ENCODE measurements at regions of chr1 and their contacts with region 1.

Region 1: DNA sequence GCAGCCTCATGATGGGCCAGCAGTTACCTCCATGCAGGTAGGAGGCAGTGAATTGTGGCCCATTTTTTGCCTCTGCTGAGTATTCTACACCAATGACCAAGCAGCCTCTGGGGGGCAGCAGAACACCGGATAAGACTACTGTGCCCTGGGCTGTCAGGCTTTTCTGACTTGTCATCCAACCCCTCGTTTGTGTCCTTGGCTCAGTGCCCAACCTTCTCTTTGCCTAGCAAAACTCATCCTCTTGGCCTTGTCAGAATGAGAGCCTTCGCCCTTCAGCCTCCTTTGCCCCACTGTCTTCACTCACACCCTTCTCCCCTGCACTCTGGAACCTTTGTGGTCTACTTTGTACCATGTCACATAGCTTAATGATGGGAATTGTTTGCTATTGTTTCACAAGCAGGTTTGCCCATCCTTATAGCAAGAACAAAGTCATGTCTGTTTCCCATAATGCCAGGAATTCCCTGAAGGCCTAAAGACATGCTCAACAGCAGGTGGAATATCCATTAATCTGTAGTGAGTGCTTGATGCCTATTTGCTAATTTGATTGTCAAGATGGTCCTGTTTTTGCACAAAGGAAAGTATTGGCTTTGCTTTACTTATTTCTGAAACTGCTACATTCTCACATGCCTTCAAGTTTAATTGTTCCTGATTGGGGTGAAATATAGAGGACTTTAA is 255.9 kb downstream of the HHAT start:
- DNase-seq: peak; percentile 83
- ATAC-seq: peak; percentile 80

Region 2: DNA sequence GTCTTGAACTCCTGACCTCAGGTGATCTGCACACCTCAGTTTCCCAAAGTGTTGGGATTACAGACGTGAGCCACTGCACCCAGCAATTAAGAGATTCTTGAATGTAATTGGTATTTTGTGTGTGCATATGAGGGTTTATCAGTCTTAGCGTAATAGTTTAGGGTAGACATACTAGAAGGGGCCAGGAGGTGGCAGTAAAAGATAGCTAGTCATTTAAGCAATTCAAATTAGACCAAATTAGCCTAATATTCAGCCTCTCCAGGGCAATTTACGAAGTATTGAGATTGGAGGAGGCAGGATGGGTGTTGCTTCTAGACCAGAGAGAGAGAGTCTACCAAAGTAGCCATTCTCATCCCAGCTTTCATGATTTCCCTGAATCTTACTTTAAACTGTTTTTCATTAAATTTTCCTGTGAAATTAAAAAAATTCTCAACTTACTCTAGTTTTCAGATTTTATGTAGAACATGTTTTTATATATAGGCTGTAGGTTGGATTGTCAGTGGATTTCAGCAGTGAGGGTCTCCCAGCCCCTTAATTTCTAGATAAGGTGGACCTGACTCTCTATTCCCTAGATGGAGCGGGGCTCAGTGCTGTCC is 136.2 kb before region 1 on chr1:
- intact Hi-C with region 1: loop called (anchors 5 kb)
- DNase-seq: no peak
- ATAC-seq: no peak

Region 3: DNA sequence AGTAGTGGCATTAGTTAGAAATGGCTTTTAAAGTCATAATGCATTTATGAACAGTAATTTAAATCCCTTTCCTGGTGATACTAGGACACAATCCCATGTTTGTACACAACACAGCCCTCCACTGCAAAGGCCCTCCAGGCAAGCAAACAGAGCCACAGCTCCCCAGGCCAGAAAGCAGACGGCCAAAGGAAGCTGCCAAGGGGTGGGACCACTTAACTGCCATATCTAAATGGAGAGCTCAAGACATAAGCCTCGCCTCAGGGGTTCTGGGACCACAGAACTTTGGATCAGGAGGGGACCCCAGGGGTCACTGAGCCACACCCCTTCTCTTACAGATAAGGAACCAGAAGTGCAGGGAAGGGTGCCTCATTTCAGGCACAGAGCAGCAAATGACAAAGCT is 359.7 kb after region 1 on chr1:
- intact Hi-C with region 1: loop called (anchors 10 kb)
- DNase-seq: no peak
- ATAC-seq: no peak